B cell (primary cell): ENCODE measurements at regions of chr1 and their contacts with region 1.

Region 1: GRCh38 chr1:26889551-26890466 is at the start of gene GPN2:
- DNase-seq: peak; percentile 88
- ATAC-seq: peak; percentile 92
- H3K4me3 ChIP-seq: peak within 1 kb of the TSS; percentile 73 to 94 (median 89)
- H3K4me3 Mint-ChIP-seq: peak within 1 kb of the TSS; percentile 96
- H3K27ac ChIP-seq: peak within 1 kb of the TSS; percentile 61 to 94
- H3K27ac Mint-ChIP-seq: peak within 1 kb of the TSS; percentile 95
- H3K4me1 ChIP-seq: peaks cover 15 to 21% of the 10 kb centered on the region in 2 donors
- H3K4me1 Mint-ChIP-seq: peaks cover 35% of the 10 kb centered on the region
- H3K27me3 ChIP-seq: no peaks in the 10 kb centered on the region
- H3K27me3 Mint-ChIP-seq: no peaks in the 10 kb centered on the region
- CTCF ChIP-seq: no peak
- total RNA-seq, gene GPN2: 40.7 and 43.5 TPM in 2 replicates

Region 2: GRCh38 chr1:26900001-26900814 is 10.4 kb after region 1 on chr1 and contains the start of gene GPATCH3:
- CTCF ChIA-PET with region 1: interaction called, 14 read pairs
- POLR2A ChIA-PET with region 1: interaction called, 26 read pairs
- intact Hi-C with region 1: loop called (anchors 1 kb)
- DNase-seq: peak; percentile 94
- ATAC-seq: peak; percentile 92
- H3K4me3 ChIP-seq: peak within 1 kb of the TSS; percentile 84 to 100 (median 97)
- H3K4me3 Mint-ChIP-seq: peak within 1 kb of the TSS; percentile 92
- H3K27ac ChIP-seq: peak within 1 kb of the TSS; percentile 82 to 92
- H3K27ac Mint-ChIP-seq: peak within 1 kb of the TSS; percentile 99
- H3K4me1 ChIP-seq: peaks cover 16 to 20% of the 10 kb centered on the region in 2 donors
- H3K4me1 Mint-ChIP-seq: peaks cover 36% of the 10 kb centered on the region
- H3K27me3 ChIP-seq: no peaks in the 10 kb centered on the region
- H3K27me3 Mint-ChIP-seq: no peaks in the 10 kb centered on the region
- CTCF ChIP-seq: no peak
- total RNA-seq, gene GPATCH3: 21.9 and 28.6 TPM in 2 replicates

Region 3: DNA sequence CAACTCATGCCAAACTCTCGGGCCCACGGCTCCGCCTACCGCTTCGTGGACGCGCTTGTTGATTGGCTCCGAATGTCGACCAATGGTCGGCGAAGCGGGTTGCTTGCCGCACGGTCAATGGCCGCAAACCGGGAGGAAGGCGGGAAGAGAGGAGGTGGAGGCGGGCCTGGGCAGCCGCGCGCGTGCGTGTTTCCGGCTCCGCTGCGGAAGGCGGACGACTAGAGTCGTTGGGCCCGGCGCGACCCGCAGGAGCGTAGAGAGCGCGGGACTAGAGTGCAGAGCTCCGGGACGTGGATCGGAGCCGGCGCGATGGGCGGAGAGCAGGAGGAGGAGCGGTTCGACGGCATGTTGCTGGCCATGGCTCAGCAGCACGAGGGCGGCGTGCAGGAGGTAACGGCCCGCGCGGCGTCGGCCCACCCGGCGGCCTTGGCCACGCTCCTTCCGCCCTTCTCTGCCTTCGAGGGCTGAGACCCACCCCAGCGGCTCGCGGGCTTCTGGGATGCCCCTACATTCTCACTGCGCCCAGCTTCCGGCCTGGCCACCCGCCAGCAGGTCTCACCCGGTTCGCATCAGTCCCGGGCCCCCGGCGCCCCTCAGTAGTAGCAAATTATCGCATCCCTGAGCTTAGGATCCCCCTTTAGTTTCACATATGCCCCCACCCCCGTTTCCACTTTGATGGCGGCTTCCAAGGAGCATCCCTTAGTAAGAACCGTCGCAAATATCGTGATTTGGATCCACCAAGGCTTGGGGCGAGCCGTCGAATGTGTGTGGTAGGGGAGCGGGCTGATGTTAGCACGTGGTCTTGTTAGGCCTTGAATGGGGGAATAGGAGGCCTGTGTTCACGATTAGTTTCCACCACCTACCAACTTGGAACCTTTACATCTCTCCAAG is 32.0 kb after region 1 on chr1 and contains the start of gene NUDC:
- CTCF ChIA-PET with region 1: no interaction called
- POLR2A ChIA-PET with region 1: interaction called, 7 read pairs
- intact Hi-C with region 1: loop called (anchors 1 kb)
- DNase-seq: peak; percentile 96
- ATAC-seq: peak; percentile 96
- H3K4me3 ChIP-seq: peak within 1 kb of the TSS; percentile 61 to 88 (median 80)
- H3K4me3 Mint-ChIP-seq: peak within 1 kb of the TSS; percentile 93
- H3K27ac ChIP-seq: peak within 1 kb of the TSS; percentile 68 to 93
- H3K27ac Mint-ChIP-seq: peak within 1 kb of the TSS; percentile 93
- H3K4me1 ChIP-seq: peaks cover 17 to 20% of the 10 kb centered on the region in 2 donors
- H3K4me1 Mint-ChIP-seq: peaks cover 33% of the 10 kb centered on the region
- H3K27me3 ChIP-seq: no peaks in the 10 kb centered on the region
- H3K27me3 Mint-ChIP-seq: no peaks in the 10 kb centered on the region
- CTCF ChIP-seq: no peak
- total RNA-seq, gene NUDC: 45.3 and 50.1 TPM in 2 replicates